Cardiac septum (tissue), 1 donor: ENCODE measurements at regions of chr3 and their contacts with region 1.

Region 1: DNA sequence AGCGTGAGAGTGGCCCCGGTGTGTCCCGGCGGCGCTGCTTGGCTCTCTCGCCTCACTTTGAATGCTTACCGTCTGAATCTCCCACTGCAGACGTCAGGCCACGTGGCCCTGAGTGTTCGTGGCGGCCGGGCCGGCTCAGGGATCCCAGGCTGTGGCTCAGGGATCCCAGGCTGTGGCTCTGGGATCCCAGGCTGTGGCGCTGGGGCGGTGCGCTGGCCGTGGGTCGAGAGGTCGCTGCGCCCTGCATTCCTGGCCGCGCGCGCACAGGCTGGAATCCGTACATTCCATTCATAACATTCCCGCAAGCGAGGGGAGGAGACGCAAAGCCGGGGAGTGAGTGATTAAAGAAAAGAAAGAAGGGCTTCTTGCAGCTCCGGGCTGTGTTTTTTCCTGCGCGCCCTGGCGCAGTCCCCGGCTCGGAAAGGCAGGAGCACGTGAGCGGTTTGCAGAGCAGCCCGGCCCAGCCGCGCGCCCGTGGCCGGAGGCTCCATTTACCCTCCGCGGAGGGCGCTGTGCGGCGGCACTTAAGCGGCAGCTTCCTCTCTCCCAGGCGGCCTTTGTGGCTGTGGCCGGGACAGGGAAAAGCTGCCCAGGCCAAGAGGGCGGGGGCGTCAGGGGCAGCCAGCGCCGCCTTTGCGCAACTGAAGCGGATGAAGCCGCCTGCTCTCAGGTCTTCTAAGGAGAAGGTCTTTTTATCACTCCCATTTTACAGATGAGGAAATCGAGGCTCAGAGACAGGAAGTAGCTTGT is 87.0 kb upstream of the ALDH1L1 start:
- DNase-seq: peak; percentile 82

Region 2: DNA sequence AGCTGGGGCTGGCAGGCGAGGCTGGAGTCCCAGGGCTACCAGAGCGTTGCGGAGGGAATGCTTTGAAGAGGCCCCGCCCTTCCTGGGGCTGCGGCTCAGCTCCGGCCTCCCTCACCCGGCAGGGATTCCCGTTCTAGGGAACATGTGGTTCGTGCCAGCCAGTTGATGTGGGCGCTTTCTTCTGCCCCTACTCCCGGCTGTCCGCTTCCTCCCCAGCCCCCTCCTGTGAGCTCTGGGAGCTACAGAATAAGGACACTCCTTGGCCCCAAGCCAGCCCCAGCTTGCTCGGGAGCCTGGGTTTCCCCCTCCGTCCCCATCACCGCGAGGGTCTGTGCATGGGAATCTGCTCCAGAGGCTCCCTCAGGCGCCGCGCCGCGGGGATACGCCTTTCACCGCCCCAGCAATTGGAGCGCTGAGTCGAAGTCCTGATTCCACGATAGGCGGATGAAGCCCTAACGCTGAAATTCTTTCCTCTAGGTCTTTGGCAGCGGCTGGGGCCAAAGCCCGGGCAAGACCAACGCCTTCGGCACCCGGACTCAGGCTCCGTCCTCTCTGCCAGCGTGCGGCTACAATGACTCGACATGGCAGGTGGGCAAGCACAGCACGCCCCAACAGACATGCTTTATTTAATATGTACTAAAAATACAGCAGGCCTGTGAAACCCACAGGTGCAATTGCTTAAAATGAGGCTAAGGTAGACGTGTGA is 20.3 kb after region 1 on chr3:
- intact Hi-C with region 1: loop called (anchors 2 kb)
- DNase-seq: no peak

Region 3: DNA sequence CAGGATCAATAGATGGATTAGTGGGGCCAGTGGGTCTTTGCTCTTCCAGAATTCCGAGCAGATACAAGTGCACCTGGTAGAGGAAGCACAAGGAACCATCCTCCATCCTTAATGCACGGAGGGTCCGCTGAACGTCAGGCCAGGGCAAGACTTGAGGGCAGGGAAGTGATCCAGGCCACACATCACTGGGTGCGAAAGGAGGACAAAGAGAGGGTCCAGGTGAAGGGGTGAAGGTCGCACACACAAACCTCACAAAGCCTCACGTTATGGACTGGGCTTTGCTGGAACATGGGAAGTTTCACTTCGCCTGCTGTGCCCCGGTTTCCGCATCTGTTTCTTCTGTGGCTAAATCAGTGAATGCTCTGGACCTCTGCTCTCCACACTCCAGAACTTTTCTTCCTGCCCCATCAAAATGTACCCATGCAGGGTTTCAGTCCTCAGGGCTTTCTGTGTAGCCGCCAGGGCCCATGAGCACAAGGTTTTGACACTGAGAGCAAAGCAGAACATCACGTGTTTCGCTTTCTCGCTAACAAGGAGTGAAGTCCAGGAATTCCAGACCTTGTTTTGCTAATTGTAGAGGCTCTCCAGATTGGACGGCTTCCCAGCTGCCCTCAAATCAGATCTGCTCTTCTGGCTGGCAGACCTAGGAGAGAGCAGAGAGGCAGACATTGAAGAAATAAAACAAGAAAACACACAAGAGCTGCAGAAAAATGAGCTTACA is 33.5 kb after region 1 on chr3:
- intact Hi-C with region 1: loop called (anchors 5 kb)
- DNase-seq: no peak